ENCODE measurements at regions of chr10 and their contacts with region 1.

Region 1: GRCh38 chr10:59865101-59865500 is 41.3 kb downstream of the CCDC6 start:
- DNase-seq: peak; percentile 36
- ATAC-seq: peak; percentile 77
- H3K4me3 Mint-ChIP-seq: no peak overlapping the region
- H3K27ac Mint-ChIP-seq: no peak overlapping the region
- H3K4me1 Mint-ChIP-seq: peaks cover 20% of the 10 kb centered on the region
- H3K27me3 Mint-ChIP-seq: no peaks in the 10 kb centered on the region

Region 2: DNA sequence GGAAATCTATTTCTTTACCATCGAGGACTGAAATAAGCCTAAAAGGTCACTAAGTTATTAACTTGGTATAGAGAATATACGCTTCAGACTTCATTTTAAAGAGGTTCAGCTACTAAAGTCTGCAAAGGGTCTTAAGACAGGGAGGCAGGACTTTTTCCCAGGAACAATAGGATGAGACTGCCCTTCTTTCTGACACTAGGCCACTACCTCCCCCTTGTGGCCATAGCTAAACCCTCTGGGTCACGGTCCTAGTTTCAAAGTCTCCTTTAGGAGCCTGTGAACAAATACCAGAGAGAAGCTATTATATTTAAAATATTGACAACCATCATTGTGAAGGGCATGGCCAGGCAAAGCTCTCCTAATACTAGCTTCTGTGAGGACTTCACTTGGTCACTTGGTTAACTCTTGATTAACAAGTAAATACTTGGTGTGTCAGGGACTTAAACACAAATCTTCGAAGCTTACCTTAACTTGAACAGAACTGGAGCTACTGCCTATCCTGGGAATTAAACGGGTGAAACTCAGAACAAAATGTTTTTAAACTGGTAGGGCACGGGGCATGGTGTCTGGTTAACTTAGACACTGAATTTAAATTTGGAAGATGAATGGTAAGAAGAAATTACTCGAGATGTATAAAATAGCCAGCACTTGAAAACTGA is 34.4 kb before region 1 on chr10:
- CTCF ChIA-PET with region 1: interaction called, 15 read pairs
- POLR2A ChIA-PET with region 1: no interaction called
- DNase-seq: peak; percentile 37
- ATAC-seq: no peak
- H3K4me3 Mint-ChIP-seq: no peak overlapping the region
- H3K27ac Mint-ChIP-seq: no peak overlapping the region
- H3K4me1 Mint-ChIP-seq: peaks cover 19% of the 10 kb centered on the region
- H3K27me3 Mint-ChIP-seq: no peaks in the 10 kb centered on the region

Region 3: GRCh38 chr10:59879361-59879913 is 14.3 kb after region 1 on chr10:
- CTCF ChIA-PET with region 1: interaction called, 18 read pairs
- POLR2A ChIA-PET with region 1: interaction called, 3 read pairs
- DNase-seq: no peak
- ATAC-seq: peak; percentile 42
- H3K4me3 Mint-ChIP-seq: peak overlapping the region; percentile 23
- H3K27ac Mint-ChIP-seq: peak overlapping the region; percentile 59
- H3K4me1 Mint-ChIP-seq: peaks cover 64% of the 10 kb centered on the region
- H3K27me3 Mint-ChIP-seq: no peaks in the 10 kb centered on the region

Region 4: DNA sequence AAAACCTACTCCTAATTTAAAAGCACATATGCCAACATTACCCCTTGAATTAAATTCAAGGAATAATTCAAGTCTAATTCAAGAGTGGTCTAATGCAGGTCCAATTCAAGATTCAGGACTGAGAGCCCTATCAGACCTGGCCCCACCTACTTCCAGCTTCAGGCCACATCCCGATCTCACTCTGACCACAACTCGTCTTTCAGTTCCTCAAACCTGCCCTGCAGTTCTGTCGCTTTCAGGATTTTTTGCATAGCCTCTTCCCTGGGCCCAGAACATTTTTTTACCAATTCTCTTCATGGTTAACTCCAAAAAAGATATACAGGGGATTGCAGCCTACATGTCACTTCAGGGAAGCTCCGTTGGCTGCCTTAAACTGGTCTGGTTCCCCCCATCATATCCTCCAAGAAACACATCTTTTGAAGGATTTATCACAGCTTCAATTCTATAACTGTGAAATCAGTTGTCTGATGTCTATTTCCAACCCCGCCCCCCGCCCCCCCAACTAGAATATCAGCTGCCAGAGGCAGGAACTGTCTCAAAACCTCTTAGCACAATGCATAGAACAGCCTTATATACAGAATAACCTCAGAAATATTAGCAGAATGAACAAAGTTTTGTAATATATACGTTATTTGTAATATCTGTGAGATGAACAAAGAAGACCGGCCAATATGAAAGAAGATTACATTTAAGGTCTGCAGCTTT is 20.5 kb after region 1 on chr10:
- CTCF ChIA-PET with region 1: interaction called, 20 read pairs
- POLR2A ChIA-PET with region 1: interaction called, 3 read pairs
- DNase-seq: peak; percentile 48
- ATAC-seq: peak; percentile 39
- H3K4me3 Mint-ChIP-seq: peak overlapping the region; percentile 13
- H3K27ac Mint-ChIP-seq: peak overlapping the region; percentile 0
- H3K4me1 Mint-ChIP-seq: peaks cover 71% of the 10 kb centered on the region
- H3K27me3 Mint-ChIP-seq: no peaks in the 10 kb centered on the region

Measured in activated CD8-positive, alpha-beta T cell treated with anti-CD3 and anti-CD28 coated beads, Interleukin-2, amount 10 ng/mL, durations not matched to agents 7 days and 5 days (primary cell).